ENCODE measurements at regions of chr1 and their contacts with region 1.

Region 1: DNA sequence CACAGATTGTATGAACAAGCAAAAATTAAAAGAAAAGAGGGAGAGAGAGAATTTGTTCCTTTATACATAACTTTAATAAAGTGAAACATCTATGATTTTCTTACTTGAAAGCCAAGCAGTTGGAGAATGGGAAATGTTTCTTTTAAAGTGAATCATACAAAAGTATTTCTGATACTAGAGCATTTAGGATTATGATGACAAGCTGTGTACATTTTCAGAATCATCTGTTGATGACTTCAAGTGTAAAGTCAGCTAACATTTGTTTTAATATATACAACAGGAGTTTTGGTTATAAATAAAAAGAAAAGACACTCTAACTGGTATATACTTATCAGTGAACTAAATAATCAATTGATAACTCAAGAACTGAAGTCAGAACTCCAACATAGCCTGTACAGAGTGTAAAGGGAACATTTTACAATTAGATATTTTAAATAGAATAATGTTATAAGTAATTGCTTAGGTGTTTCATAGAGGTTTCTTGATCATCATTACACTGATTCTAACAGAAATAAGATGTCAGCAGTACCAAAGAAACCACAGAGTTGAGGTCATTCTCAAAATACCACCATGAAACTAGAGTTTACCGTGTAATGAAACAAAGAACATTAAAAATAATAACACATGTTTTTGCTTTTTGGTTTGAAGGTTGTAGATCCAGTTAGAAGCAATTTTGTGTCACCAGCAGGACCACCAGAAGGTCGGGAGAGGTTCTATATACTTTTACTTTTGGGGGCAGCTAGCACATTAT is 103.4 kb downstream of the COL24A1 start:
- DNase-seq: no peak
- ATAC-seq: no peak
- H3K4me3 ChIP-seq: no peak overlapping the region
- H3K27ac ChIP-seq: no peak overlapping the region
- H3K4me1 ChIP-seq: no peaks in the 10 kb centered on the region
- H3K27me3 ChIP-seq: no peaks in the 10 kb centered on the region
- CTCF ChIP-seq: no peak

Region 2: GRCh38 chr1:86137436-86137835 is 84.3 kb after region 1 on chr1:
- intact Hi-C with region 1: loop called in 1 of 10 experiments (anchors 10 kb)
- DNase-seq: no peak
- ATAC-seq: no peak
- H3K4me3 ChIP-seq: no peak overlapping the region
- H3K27ac ChIP-seq: no peak overlapping the region
- H3K4me1 ChIP-seq: peaks cover 0 to 5% (median 0%) of the 10 kb centered on the region in 9 donors
- H3K27me3 ChIP-seq: no peaks in the 10 kb centered on the region
- CTCF ChIP-seq: no peak